Activated naive CD4-positive, alpha-beta T cell treated with anti-CD3 and anti-CD28 coated beads for 36 hours (primary cell): ENCODE measurements at regions of chr1 and their contacts with region 1.

Region 1: DNA sequence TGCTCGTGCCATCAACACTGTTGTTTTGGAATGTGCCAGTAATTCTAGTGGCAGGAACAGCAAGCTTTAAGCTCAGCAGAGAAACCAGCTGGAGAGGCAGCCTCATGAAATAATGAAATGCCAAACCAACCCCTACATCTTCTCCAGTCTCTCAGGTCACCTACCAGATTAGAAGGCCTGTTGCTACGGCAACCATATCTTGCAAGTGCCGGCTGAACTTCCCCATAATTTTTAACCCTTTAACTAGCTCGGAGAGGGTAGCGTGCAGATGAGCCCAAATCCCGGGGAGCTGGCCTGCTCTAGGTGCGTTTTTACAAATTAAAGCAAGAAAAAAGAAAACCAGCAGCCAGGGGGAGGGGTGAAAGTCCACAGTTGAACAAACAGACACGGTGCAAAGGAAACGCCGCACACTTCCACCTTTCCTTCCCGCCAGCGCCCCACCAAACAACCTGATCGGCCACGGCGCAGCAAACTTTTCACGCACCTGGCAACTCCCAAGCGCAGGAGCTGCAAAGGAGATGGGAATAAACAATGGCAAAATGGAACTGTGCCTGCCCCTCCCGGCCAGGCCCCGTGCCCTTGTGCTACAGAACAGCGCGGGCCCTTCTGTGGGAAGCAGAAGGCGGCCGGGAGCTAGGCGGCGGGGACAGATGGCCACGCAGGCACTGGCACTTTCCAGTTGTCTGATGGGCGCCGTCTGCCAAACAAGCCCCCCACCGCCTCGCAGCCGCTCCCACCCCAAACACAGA is 50.1 kb downstream of the SSBP3 start:
- DNase-seq: peak; percentile 56
- H3K4me3 Mint-ChIP-seq: peak overlapping the region; percentile 80
- H3K27ac Mint-ChIP-seq: peak overlapping the region; percentile 88
- H3K4me1 Mint-ChIP-seq: peaks cover 91% of the 10 kb centered on the region
- H3K27me3 Mint-ChIP-seq: no peaks in the 10 kb centered on the region

Region 2: GRCh38 chr1:54199765-54200518 is 156.2 kb before region 1 on chr1 and contains the starts of genes CYB5RL and MRPL37:
- CTCF ChIA-PET with region 1: no interaction called
- intact Hi-C with region 1: loop called (anchors 5 kb)
- DNase-seq: peak; percentile 96
- H3K4me3 Mint-ChIP-seq: peak within 1 kb of the TSS; percentile 92
- H3K27ac Mint-ChIP-seq: peak within 1 kb of the TSS; percentile 59
- H3K4me1 Mint-ChIP-seq: peaks cover 32% of the 10 kb centered on the region
- H3K27me3 Mint-ChIP-seq: no peaks in the 10 kb centered on the region
- total RNA-seq, gene CYB5RL: 12.7 to 13.6 TPM
- total RNA-seq, gene MRPL37: 203 to 211 TPM

Region 3: DNA sequence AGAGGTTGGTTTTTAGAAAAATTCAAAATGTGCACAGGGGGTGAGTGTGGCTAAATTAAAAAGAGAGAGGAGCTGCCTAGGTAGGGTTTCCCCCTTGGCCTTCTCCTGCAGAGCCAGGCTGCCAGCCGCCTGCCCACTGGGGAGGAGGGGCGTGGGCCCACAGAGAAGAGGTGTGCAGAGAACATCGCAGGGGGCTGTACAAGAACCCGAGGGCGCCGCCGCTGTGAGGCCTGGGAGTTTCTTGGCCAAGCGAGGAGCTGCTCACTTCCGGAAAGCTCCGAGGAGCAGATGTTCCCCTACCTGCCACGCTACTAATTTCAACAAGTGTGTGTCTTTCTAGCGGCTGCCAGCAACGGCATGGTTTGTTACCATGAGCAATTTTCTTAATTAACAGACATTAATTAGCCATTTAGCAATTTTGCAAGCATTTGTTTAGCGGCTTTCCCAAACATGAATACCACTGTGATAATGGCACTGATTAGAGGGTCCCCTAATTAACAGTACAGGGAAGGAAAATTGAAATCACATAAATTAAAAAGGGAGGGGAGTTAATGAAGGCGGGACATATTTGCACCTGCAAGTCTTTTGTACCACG is 96.5 kb before region 1 on chr1:
- CTCF ChIA-PET with region 1: no interaction called
- intact Hi-C with region 1: no loop called
- DNase-seq: no peak
- H3K4me3 Mint-ChIP-seq: no peak overlapping the region
- H3K27ac Mint-ChIP-seq: no peak overlapping the region
- H3K4me1 Mint-ChIP-seq: peaks cover 8% of the 10 kb centered on the region
- H3K27me3 Mint-ChIP-seq: no peaks in the 10 kb centered on the region

Region 4: DNA sequence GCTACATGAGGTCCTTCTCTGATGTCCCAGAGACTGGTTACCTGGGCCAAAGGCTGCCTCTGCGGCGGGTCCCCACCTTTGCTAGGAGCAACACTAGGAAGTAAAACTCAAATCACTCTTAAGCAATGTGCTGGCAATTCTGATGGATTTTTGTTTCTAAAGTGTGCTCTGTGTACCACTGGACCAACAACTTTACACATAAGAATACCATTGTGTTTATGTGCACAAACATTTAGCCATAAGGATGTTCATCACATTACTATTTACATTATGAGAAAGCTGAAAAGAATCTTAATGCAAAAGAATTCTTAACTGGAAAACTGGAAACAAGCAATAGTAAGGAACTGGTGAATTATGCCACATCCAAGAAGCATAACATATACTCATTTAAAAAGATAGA is 11.5 kb after region 1 on chr1:
- CTCF ChIA-PET with region 1: interaction called, 12 read pairs
- intact Hi-C with region 1: no loop called
- DNase-seq: no peak
- H3K4me3 Mint-ChIP-seq: no peak overlapping the region
- H3K27ac Mint-ChIP-seq: no peak overlapping the region
- H3K4me1 Mint-ChIP-seq: peaks cover 56% of the 10 kb centered on the region
- H3K27me3 Mint-ChIP-seq: no peaks in the 10 kb centered on the region

Region 5: GRCh38 chr1:54376430-54377039 is 20.4 kb after region 1 on chr1:
- CTCF ChIA-PET with region 1: no interaction called
- intact Hi-C with region 1: loop called (anchors 1 kb)
- DNase-seq: peak; percentile 74
- H3K4me3 Mint-ChIP-seq: no peak overlapping the region
- H3K27ac Mint-ChIP-seq: peak overlapping the region; percentile 33
- H3K4me1 Mint-ChIP-seq: peaks cover 84% of the 10 kb centered on the region
- H3K27me3 Mint-ChIP-seq: no peaks in the 10 kb centered on the region

Region 6: DNA sequence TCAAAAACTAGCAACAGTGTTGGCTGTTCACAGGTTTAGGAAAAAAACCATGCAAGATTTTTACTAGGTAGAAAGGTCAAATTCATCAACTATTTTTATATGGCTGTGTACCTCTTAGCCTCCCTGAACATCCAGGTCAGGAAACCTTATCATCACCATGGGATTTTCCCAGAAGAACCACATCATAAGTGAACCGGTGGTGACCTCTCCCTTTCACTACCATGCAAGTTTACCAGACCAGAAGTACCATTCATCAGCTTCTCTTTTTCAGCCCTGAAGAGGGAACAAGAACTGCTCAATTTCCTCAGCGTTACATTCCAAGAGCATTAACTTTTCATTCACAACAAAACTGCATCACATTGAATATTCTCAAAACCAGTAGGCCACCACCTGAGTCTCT is 44.2 kb after region 1 on chr1:
- CTCF ChIA-PET with region 1: interaction called, 3 read pairs
- intact Hi-C with region 1: loop called (anchors 1 kb)
- DNase-seq: peak; percentile 78
- H3K4me3 Mint-ChIP-seq: peak overlapping the region; percentile 36
- H3K27ac Mint-ChIP-seq: peak overlapping the region; percentile 68
- H3K4me1 Mint-ChIP-seq: peaks cover 74% of the 10 kb centered on the region
- H3K27me3 Mint-ChIP-seq: no peaks in the 10 kb centered on the region